ENCODE measurements at regions of chr1 and their contacts with region 1.

Region 1: DNA sequence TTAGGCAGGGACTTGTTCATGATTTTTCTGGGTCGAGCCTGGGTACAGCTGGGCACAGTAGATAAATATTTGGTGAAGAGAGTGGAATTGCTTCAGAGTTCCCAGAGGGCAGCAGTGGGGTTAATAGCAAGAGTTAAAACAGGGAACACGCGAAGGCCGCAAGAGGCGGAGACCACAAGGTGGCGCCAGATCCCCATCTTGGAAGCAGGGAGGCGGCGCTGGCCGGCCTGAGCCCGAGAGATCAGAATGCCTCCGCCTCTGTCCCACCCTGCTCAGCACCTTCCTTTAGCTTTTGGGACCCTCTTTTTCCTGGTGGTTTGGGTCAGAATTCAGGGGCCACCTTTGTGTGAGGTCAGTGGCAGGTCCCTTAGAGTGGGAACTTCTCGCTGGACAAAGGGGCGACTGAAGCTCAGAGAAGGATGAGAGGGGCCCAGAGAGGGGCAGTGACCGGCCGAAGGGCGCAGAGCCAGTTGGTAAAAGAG is 6.5 kb upstream of the PADI2 start:
- DNase-seq: peak; percentile 96
- ATAC-seq: peak; percentile 83

Region 2: DNA sequence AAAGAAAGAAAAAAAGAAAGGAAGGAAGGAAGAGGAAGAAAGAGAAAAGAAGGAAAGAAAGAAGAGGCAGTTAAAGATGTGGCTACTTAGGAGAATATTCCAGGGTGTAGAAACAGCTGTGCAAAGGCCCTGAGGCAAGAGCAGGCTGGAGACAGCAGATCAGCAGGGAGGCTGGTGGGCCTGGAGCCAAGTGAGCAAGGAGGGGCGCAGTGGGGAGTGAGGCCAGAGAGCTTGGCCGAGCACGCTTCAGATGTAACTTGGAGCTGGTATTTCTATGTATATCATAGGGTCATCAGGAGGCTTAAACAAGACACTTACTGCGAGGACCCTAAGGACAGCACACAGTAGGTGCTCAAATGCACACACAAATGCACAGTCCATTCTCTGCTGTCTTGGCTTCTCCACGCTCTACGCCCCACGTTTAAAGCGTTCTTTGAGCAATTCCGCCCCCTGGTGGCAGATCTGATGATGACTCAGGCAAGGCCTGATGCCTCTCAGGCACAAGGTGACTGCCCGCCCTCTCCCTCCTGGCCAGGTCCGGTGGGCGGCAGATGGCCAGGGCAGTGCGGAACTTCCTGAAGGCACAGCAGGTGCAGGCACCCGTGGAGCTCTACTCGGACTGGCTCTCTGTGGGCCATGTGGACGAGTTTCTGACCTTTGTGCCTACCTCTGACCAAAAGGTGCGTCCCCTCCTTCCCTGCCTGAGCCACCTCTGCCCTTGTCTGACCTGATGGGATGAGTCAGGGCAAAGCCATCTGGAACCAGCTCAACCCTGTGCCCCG is 111.2 kb after region 1 on chr1:
- intact Hi-C with region 1: loop called (anchors 1 kb)
- DNase-seq: peak; percentile 91
- ATAC-seq: peak; percentile 76

Region 3: DNA sequence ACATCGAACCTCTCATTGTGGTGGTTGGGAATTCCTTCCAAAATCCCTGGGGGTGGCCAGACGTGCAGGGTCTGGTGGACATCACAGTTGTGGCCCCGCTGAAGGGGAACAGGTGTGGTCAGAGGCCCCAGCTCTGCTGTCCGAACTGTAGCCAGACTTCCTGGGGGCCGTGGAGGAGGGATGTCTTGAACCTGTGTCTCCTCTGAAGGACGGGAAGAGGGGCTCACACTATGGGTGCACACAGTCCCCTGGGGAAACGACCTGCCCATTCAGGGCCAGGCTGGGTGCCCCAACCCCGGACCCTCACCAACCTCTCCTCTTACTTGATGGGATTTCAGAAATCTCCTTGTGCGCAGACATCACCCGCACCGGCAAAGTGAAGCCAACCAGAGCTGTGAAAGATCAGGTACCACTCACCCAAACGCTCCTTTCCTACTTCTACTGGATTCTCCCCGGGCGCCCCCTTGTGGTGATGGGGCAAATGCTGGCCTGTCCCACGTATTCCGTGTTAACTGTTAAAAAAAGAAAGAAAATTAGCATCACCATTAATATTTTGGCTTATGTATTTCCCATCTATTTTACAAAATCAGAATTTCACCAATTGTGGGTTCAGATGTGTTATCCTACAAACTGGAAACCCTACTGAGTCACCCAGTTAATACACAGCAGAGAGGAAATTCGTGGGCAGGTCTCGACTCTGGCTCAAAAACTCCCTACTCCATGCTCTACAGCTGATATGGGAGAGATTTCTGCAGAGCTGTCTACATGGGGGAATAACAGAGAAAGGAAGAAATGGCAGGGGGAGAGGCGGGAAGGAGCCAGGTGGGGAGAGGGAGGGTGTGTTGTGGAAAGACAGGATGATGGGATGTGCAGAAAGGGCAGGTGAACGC is 210.3 kb after region 1 on chr1:
- intact Hi-C with region 1: loop called (anchors 2 kb)
- DNase-seq: peak; percentile 80
- ATAC-seq: no peak

Region 4: GRCh38 chr1:17405898-17406759 is 280.3 kb after region 1 on chr1:
- intact Hi-C with region 1: loop called (anchors 10 kb)
- DNase-seq: peak; percentile 77
- ATAC-seq: peak; percentile 89

Measured in Right ventricle myocardium inferior (tissue), 1 donor.